Activated CD4-positive, alpha-beta T cell treated with anti-CD3 and anti-CD28 coated beads, Interleukin-2, amount 10 ng/mL, durations not matched to agents 24 days and 14 days (primary cell): ENCODE measurements at regions of chr9 and their contacts with region 1.

Region 1: DNA sequence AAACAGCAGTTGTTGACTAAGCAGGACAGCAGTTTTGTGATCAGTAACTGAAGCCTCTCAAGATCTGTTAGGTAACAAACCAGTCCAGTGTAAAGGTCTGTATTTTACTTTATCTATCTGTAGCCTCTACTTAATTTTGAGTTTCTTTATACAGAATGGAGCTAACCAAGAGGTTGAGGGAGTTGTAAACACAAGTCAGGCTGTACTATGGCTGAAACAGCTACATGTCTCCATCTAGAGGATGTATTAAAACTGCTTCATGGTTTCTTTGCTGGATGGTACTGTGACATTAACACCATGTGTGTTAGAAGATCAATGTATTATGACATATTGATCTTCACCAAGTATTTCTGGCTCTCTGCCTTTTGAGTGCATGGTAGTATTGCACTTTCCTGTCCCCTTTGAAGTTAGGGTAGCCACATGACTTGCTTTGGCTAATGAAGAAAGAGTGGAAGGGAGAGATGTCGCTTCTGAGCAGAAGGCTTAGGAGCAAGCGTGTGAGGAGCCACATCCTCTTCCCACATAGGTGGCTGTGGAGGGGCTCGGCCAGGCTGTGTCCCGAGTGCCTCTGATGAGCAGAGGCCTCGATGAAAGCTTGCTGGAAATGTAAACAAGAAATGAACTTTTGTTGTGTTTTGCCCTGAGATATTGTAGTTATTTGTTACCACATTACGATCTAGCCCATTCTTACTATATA is 105.6 kb upstream of the PCA3 start:
- DNase-seq: peak; percentile 73
- H3K4me3 Mint-ChIP-seq: no peak overlapping the region
- H3K27ac Mint-ChIP-seq: no peak overlapping the region
- H3K4me1 Mint-ChIP-seq: peaks cover 27% of the 10 kb centered on the region
- H3K27me3 Mint-ChIP-seq: peaks cover 8% of the 10 kb centered on the region

Region 2: GRCh38 chr9:76451234-76451633 is 207.4 kb before region 1 on chr9:
- intact Hi-C with region 1: loop called (anchors 1 kb)
- DNase-seq: no peak
- H3K4me3 Mint-ChIP-seq: no peak overlapping the region
- H3K27ac Mint-ChIP-seq: no peak overlapping the region
- H3K4me1 Mint-ChIP-seq: peaks cover 18% of the 10 kb centered on the region
- H3K27me3 Mint-ChIP-seq: no peaks in the 10 kb centered on the region

Region 3: GRCh38 chr9:76603448-76603895 is 55.2 kb before region 1 on chr9:
- intact Hi-C with region 1: loop called (anchors 5 kb)
- DNase-seq: no peak
- H3K4me3 Mint-ChIP-seq: no peak overlapping the region
- H3K27ac Mint-ChIP-seq: no peak overlapping the region
- H3K4me1 Mint-ChIP-seq: peaks cover 8% of the 10 kb centered on the region
- H3K27me3 Mint-ChIP-seq: peaks cover 12% of the 10 kb centered on the region